ENCODE measurements at regions of chr11 and their contacts with region 1.

Region 1: DNA sequence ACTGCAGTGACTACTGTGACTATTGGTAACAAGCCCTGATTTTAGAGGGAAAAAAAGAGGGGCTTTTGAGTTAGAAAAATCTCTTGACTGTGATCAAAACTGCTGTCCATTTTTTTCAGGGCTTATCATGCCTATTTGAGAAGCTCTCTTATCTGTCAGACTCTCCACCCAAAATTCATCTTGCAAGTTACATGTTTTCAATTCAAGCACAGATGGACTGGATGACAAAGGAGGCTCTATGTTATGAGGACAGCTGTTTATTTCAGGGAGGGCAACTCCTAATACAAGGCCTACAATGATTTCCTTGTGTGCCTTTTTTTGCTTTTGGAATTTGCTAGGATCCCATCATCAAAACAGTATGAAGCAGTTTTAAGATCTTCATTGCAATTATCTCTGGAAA is 35.2 kb upstream of the USP47 start:
- DNase-seq: no peak
- ATAC-seq: no peak
- H3K4me3 ChIP-seq: no peak overlapping the region
- H3K27ac ChIP-seq: no peak overlapping the region
- H3K4me1 ChIP-seq: no peaks in the 10 kb centered on the region
- H3K27me3 ChIP-seq: no peaks in the 10 kb centered on the region
- CTCF ChIP-seq: no peak
- POLR2A ChIP-seq: no peak

Region 2: DNA sequence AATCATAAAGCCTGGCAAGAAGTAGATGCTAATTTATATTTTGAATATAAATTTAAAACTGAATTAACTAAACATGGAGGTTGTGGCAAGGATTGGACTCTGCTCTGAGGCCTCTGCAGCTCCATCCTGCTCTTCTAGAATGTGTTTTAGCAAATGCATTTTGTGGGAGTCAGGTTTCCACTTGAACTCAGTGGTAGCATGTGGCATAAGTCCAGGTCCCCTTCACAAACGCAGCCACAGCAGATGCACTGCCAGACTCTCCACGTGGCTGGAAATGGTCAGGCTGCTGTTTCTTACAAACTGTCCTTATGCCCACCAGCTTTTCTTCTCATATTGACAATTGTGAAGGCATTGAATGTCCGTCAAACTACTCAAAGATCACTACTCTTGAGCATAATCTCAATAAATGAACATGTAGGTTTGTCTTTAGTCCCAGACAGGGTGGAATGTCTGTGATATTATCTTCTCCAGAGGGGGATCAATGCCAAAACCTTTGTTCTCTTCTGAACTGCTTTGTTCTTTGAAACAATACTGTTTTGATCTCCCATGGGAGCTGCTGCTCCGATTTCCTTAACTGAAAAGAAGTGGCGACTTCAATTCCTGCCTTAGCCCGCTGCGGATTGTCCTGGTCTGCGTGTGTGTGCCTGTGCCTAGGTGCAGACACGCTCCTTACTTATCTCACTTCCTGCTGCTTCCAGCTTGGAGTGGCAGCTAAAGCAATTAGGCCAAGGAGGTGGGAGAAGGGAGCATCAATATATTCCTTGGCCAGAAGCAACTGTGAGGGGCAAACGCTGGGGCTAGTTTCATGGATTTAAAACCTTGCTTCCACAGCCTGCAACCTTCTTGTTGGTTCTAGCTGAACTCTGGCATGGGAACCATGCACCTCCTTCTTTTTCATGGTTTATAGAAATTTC is 1022.1 kb before region 1 on chr11:
- intact Hi-C with region 1: loop called (anchors 10 kb)
- DNase-seq: no peak
- ATAC-seq: no peak
- H3K4me3 ChIP-seq: no peak overlapping the region
- H3K27ac ChIP-seq: no peak overlapping the region
- H3K4me1 ChIP-seq: no peaks in the 10 kb centered on the region
- H3K27me3 ChIP-seq: no peaks in the 10 kb centered on the region
- CTCF ChIP-seq: no peak
- POLR2A ChIP-seq: no peak

Region 3: DNA sequence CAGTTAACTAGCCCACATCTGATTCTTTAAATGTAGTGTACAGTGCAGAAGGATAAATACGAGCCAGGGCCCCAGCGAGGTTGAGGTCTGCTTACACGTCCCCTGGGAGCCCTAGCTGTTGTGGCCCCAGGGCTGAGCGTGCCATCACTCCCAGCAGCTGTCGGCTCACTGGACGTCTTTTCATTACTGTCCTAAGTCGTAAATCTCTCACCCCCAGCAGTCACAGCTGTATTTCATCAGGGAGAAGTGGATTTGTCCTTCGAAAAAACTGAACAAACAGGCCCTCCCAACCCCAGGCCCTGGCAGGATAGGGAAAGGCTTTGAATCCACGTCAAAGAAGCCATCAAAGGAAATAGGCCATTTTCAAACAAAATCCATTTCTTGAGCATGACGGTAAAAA is 343.2 kb before region 1 on chr11:
- intact Hi-C with region 1: no loop called
- DNase-seq: no peak
- ATAC-seq: no peak
- H3K4me3 ChIP-seq: no peak overlapping the region
- H3K27ac ChIP-seq: no peak overlapping the region
- H3K4me1 ChIP-seq: peaks cover 6% of the 10 kb centered on the region
- H3K27me3 ChIP-seq: no peaks in the 10 kb centered on the region
- CTCF ChIP-seq: no peak
- POLR2A ChIP-seq: no peak

Region 4: DNA sequence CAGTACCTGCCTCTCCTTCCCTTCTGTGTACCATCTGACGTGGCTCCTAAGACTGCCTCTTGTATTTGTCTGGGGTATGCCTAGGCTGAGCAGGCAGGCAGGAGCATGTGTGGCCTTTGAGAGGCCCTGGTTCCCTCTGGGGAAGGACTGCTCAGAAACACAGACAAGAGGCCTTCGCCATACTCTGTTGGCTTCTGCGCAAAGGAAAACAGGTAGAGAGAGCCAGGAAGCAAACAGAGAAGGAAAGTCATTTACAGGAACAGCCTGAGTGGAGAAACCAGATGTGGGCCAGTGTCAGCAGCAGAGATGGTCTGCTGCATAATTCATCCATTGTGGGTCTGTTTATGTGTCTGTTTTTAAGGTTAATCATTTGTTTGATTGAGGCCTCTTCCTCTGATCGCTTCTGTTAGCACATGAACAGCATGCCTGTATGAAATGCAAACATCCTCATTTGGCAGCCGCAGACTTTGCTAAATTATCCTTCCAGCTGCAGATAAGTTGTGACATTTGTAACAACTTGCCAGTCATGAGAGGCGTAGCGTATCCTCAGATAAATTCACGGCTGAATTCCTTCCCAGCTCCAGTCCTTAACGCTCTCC is 304.2 kb before region 1 on chr11:
- intact Hi-C with region 1: no loop called
- DNase-seq: no peak
- ATAC-seq: no peak
- H3K4me3 ChIP-seq: no peak overlapping the region
- H3K27ac ChIP-seq: peak overlapping the region in 3 of 4 donors; percentile 21 to 50 (median 46)
- H3K4me1 ChIP-seq: peaks cover 26% of the 10 kb centered on the region
- H3K27me3 ChIP-seq: no peaks in the 10 kb centered on the region
- CTCF ChIP-seq: no peak
- POLR2A ChIP-seq: no peak

Region 5: GRCh38 chr11:11841723-11842420 is 35.3 kb after region 1 on chr11 and contains the start of gene USP47:
- intact Hi-C with region 1: no loop called
- DNase-seq: peak; percentile 92 to 95 (median 92)
- ATAC-seq: peak; percentile 85
- H3K4me3 ChIP-seq: peak within 1 kb of the TSS; percentile 43 to 82
- H3K27ac ChIP-seq: peak within 1 kb of the TSS; percentile 96 to 98 (median 96)
- H3K4me1 ChIP-seq: peaks cover 36% of the 10 kb centered on the region
- H3K27me3 ChIP-seq: no peaks in the 10 kb centered on the region
- CTCF ChIP-seq: peak in 6 of 7 experiments; percentile 19 to 80 (median 68)
- POLR2A ChIP-seq: peak; percentile 86 to 95 (median 90)
- total RNA-seq, gene USP47: 51.1 to 63.3 TPM

Region 6: GRCh38 chr11:12043959-12044819 is 237.6 kb after region 1 on chr11:
- intact Hi-C with region 1: loop called (anchors 10 kb)
- DNase-seq: peak; percentile 79 to 82 (median 80)
- ATAC-seq: peak; percentile 84
- H3K4me3 ChIP-seq: no peak overlapping the region
- H3K27ac ChIP-seq: peak overlapping the region; percentile 6 to 52 (median 34)
- H3K4me1 ChIP-seq: peaks cover 14% of the 10 kb centered on the region
- H3K27me3 ChIP-seq: no peaks in the 10 kb centered on the region
- CTCF ChIP-seq: peak; percentile 82 to 97 (median 93)
- POLR2A ChIP-seq: peak in 1 of 3 donors; percentile 7

Region 7: GRCh38 chr11:12274558-12275197 is 468.1 kb after region 1 on chr11:
- intact Hi-C with region 1: loop called (anchors 10 kb)
- DNase-seq: peak in 2 of 4 donors; percentile 8 to 10
- ATAC-seq: no peak
- H3K4me3 ChIP-seq: no peak overlapping the region
- H3K27ac ChIP-seq: peak overlapping the region in 2 of 4 donors; percentile 10 to 56
- H3K4me1 ChIP-seq: peaks cover 22% of the 10 kb centered on the region
- H3K27me3 ChIP-seq: no peaks in the 10 kb centered on the region
- CTCF ChIP-seq: no peak
- POLR2A ChIP-seq: no peak

Region 8: DNA sequence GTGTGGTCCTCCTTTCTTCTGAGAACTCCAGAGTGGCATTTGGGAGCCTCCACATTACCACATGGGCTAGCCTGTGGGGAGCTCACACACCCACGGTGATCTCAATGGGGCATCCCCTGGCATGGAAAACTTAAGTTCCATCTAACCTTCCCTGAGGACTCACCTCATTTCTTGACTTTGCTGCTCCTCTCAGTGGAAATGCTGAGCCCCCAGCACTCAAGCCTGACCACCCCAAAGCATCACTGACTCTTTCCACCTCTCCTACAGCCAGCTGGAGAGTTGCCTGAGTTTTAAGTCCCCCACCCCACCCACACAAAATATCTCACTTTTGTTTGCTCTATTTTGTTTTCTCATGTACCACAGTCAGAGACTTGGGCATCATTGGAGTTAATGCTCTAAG is 546.9 kb after region 1 on chr11:
- intact Hi-C with region 1: no loop called
- DNase-seq: no peak
- ATAC-seq: no peak
- H3K4me3 ChIP-seq: no peak overlapping the region
- H3K27ac ChIP-seq: no peak overlapping the region
- H3K4me1 ChIP-seq: peaks cover 23% of the 10 kb centered on the region
- H3K27me3 ChIP-seq: no peaks in the 10 kb centered on the region
- CTCF ChIP-seq: no peak
- POLR2A ChIP-seq: no peak